ENCODE measurements at regions of chr5 and their contacts with region 1.

Region 1: DNA sequence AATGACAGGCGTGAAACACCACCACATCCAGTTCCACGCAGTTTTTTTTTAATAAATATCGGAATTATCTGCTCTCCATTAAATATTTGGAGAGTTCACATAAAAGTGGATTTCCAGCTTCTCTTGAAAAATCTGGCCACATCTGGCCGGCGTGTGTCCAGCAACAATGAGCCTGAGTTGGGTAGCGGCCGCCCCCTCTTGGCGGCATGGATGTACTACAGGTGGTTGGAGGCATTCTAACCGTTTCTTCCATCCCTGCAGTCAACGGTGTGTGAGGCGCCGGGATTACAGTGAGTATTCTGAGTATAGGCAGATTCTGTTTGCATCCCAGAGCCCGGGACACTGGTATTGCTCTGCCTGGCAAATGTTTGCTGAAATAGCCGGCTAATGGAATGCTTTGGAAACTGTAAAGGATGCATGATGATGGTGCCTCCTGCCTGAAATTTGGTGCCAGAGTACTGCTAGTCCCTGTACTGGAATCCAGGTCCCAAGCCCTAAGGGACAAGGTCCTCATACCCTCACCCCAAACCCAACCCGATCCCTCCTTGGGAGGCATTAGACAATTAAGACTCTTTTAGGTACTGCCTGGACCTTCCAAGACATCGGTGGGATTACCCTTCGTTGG is 13.6 kb upstream of the GM2A start:
- DNase-seq: peak in 5 of 9 donors; percentile 44 to 60 (median 49)
- ATAC-seq: peak; percentile 77
- H3K4me3 ChIP-seq: no peak overlapping the region
- H3K4me3 Mint-ChIP-seq: peak overlapping the region in 1 of 10 donors; percentile 60
- H3K27ac ChIP-seq: no peak overlapping the region
- H3K27ac Mint-ChIP-seq: peak overlapping the region in 2 of 9 donors; percentile 68 to 78
- H3K4me1 ChIP-seq: peaks cover 5 to 15% of the 10 kb centered on the region in 2 donors
- H3K4me1 Mint-ChIP-seq: peaks cover 8 to 42% (median 21%) of the 10 kb centered on the region in 7 donors
- H3K27me3 ChIP-seq: no peaks in the 10 kb centered on the region
- H3K27me3 Mint-ChIP-seq: no peaks in the 10 kb centered on the region

Region 2: GRCh38 chr5:150853561-150853960 is 385.8 kb before region 1 on chr5:
- CTCF ChIA-PET with region 1: no interaction called
- POLR2A ChIA-PET with region 1: no interaction called
- intact Hi-C with region 1: no loop called
- DNase-seq: no peak
- ATAC-seq: no peak
- H3K4me3 ChIP-seq: no peak overlapping the region
- H3K4me3 Mint-ChIP-seq: peak overlapping the region in 9 of 10 donors; percentile 15 to 82 (median 56)
- H3K27ac ChIP-seq: no peak overlapping the region
- H3K27ac Mint-ChIP-seq: peak overlapping the region in 3 of 9 donors; percentile 22 to 56 (median 44)
- H3K4me1 ChIP-seq: no peaks in the 10 kb centered on the region
- H3K4me1 Mint-ChIP-seq: peaks cover 0 to 34% (median 14%) of the 10 kb centered on the region in 7 donors
- H3K27me3 ChIP-seq: no peaks in the 10 kb centered on the region
- H3K27me3 Mint-ChIP-seq: peaks cover 0 to 3% (median 0%) of the 10 kb centered on the region in 5 donors

Region 3: GRCh38 chr5:151126199-151126645 is 113.1 kb before region 1 on chr5:
- CTCF ChIA-PET with region 1: interaction called, 10 read pairs
- POLR2A ChIA-PET with region 1: interaction called, 8 read pairs
- intact Hi-C with region 1: loop called (anchors 1 kb)
- DNase-seq: peak; percentile 41 to 71 (median 64)
- ATAC-seq: peak; percentile 73
- H3K4me3 ChIP-seq: no peak overlapping the region
- H3K4me3 Mint-ChIP-seq: peak overlapping the region in 9 of 10 donors; percentile 22 to 84 (median 54)
- H3K27ac ChIP-seq: peak overlapping the region; percentile 72
- H3K27ac Mint-ChIP-seq: peak overlapping the region; percentile 68 to 99 (median 91)
- H3K4me1 ChIP-seq: peaks cover under 1 to 27% of the 10 kb centered on the region in 2 donors
- H3K4me1 Mint-ChIP-seq: peaks cover 32 to 75% (median 57%) of the 10 kb centered on the region in 7 donors
- H3K27me3 ChIP-seq: no peaks in the 10 kb centered on the region
- H3K27me3 Mint-ChIP-seq: no peaks in the 10 kb centered on the region

Region 4: DNA sequence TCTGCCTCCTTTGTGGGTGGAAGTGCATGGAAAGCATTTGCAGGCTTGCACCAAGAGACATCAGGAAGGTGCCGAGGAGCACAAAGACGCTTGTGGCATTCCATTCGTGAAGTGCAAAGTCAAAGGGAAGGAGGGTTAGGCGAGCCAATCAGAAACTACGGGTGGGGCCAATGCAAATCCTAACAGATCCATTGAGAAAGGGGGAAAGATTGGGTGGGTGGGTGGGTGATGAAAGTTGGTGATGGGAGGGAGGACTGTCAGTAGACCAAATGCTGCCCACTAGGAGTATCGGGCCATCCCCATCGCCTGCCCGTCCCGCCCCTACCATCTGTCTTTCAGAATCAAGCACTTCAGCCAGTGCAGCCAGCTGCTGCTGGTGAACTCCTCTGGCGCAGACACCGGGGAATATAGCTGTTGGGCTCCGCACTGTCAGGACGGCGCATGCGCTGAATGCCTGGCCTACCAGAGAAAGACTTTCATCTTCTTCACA is 64.7 kb before region 1 on chr5:
- CTCF ChIA-PET with region 1: interaction called, 4 read pairs
- POLR2A ChIA-PET with region 1: interaction called, 3 read pairs
- intact Hi-C with region 1: loop called in 1 of 2 experiments (anchors 5 kb)
- DNase-seq: no peak
- ATAC-seq: no peak
- H3K4me3 ChIP-seq: no peak overlapping the region
- H3K4me3 Mint-ChIP-seq: no peak overlapping the region
- H3K27ac ChIP-seq: no peak overlapping the region
- H3K27ac Mint-ChIP-seq: peak overlapping the region in 7 of 9 donors; percentile 12 to 78 (median 55)
- H3K4me1 ChIP-seq: peaks cover 0 to 6% of the 10 kb centered on the region in 2 donors
- H3K4me1 Mint-ChIP-seq: peaks cover 11 to 52% (median 26%) of the 10 kb centered on the region in 7 donors
- H3K27me3 ChIP-seq: no peaks in the 10 kb centered on the region
- H3K27me3 Mint-ChIP-seq: no peaks in the 10 kb centered on the region

Region 5: DNA sequence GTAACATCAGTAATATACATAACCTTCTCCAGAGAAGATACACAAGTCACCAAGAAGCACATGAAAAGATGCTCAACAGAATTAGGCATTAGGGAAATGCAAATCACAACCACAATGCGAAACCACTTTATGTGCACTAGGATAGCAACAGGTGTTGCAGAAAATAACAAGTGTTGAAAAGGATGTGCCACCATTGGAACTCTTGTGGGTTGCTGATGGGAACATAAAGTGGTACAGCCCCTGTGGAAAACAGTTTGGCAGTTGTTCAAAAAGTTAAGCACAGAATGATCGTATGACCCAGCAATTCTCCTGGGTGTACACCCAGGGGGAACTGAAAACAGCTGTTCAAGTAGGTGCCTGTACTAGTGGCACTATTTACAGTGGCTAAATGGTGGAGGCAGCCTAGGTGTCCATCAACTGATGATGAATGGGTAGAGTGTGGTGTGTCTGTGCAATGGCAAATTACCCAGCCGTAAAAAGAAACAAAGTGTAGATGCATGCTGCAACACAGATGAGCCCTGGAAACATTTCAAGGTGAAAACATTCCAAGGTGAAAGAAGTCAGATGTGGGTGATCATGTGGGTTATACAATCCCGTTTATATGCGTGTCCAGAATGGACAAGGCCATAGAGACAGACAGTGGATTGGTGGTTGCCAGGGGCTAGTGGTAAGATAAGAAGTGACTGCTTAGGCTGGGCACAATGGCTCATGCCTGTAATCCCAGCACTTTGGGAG is 42.6 kb before region 1 on chr5:
- CTCF ChIA-PET with region 1: interaction called, 3 read pairs
- POLR2A ChIA-PET with region 1: interaction called, 4 read pairs
- intact Hi-C with region 1: loop called in 1 of 2 experiments (anchors 5 kb)
- DNase-seq: peak in 3 of 9 donors; percentile 7 to 36 (median 33)
- ATAC-seq: peak; percentile 44
- H3K4me3 ChIP-seq: no peak overlapping the region
- H3K4me3 Mint-ChIP-seq: peak overlapping the region in 6 of 10 donors; percentile 9 to 62 (median 30)
- H3K27ac ChIP-seq: peak overlapping the region; percentile 58
- H3K27ac Mint-ChIP-seq: peak overlapping the region; percentile 6 to 91 (median 79)
- H3K4me1 ChIP-seq: peaks cover 13 to 21% of the 10 kb centered on the region in 2 donors
- H3K4me1 Mint-ChIP-seq: peaks cover 30 to 72% (median 68%) of the 10 kb centered on the region in 7 donors
- H3K27me3 ChIP-seq: no peaks in the 10 kb centered on the region
- H3K27me3 Mint-ChIP-seq: no peaks in the 10 kb centered on the region

Region 6: DNA sequence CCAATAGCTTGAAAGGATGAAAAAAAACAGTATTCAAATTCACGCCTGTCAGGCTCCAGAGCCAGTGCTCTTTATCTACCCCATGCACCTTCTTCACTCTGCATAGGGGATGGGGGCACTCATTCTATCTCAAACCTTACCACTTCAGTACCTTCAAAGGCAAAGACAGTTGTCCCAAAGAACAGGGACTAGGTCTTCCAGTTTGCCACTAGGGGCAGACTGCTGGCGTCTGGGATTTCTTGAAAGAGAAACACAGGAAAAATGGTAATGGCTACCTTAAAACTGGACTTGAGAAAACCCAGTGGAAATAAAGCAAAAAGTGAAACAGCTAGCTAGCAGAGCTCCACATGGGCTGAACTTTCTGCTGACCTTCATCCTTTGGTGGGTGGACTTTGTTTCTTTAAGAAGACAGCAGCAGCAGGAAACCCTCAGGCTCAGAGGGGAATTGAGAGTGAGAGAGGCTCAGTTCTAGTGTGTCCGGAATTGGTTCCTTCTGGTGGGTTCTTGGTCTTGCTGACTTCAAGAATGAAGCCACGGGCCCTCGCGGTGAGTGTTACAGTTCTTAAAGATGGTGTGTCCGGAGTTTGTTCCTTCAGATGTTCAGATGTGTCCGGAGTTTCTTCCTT is 167.1 kb after region 1 on chr5:
- CTCF ChIA-PET with region 1: no interaction called
- POLR2A ChIA-PET with region 1: no interaction called
- intact Hi-C with region 1: no loop called
- DNase-seq: no peak
- ATAC-seq: no peak
- H3K4me3 ChIP-seq: no peak overlapping the region
- H3K4me3 Mint-ChIP-seq: no peak overlapping the region
- H3K27ac ChIP-seq: no peak overlapping the region
- H3K27ac Mint-ChIP-seq: no peak overlapping the region
- H3K4me1 ChIP-seq: no peaks in the 10 kb centered on the region
- H3K4me1 Mint-ChIP-seq: peaks cover 0 to 3% (median 0%) of the 10 kb centered on the region in 7 donors
- H3K27me3 ChIP-seq: peaks cover 2 to 6% of the 10 kb centered on the region in 2 donors
- H3K27me3 Mint-ChIP-seq: peaks cover 32 to 66% (median 58%) of the 10 kb centered on the region in 5 donors

Region 7: GRCh38 chr5:152389208-152389849 is 1150.0 kb after region 1 on chr5:
- CTCF ChIA-PET with region 1: no interaction called
- POLR2A ChIA-PET with region 1: no interaction called
- intact Hi-C with region 1: no loop called
- DNase-seq: no peak
- ATAC-seq: no peak
- H3K4me3 ChIP-seq: no peak overlapping the region
- H3K4me3 Mint-ChIP-seq: no peak overlapping the region
- H3K27ac ChIP-seq: no peak overlapping the region
- H3K27ac Mint-ChIP-seq: no peak overlapping the region
- H3K4me1 ChIP-seq: no peaks in the 10 kb centered on the region
- H3K4me1 Mint-ChIP-seq: no peaks in the 10 kb centered on the region
- H3K27me3 ChIP-seq: no peaks in the 10 kb centered on the region
- H3K27me3 Mint-ChIP-seq: peaks cover 0 to 9% (median 4%) of the 10 kb centered on the region in 5 donors